Right cardiac atrium (tissue), 5 donors: ENCODE measurements at regions of chr22 and their contacts with region 1.

Region 1: DNA sequence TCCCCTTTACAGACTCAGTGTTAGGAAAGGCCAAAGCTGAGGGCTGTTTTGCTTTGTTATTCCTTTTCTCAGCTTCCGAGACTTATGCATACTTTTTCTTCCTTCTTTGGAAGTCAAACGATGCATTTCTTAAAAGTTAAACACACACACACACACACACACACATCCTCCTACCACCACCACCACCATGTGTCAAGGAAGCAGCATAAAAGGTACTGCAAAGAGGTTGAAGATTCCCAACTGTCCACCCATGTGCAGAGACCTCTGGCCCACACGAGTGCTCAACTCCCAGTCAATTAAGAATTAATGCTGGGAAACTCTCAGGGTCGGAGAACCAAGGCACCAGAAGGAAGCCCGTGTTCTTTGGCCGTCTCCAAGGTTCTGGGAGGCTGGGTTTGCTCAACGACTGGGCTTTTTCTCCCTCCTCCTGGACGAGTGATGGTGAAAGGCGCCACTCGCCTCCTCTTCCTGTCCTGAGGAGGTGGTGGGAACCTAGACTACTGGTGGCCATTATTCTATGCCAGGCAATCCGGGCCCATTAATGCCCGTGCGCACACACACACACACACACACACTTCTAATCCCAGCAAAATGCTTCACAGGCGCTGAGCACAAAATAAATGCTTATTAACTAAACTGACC is 15.1 kb downstream of the MN1 start:
- DNase-seq: peak in 2 of 3 donors; percentile 46 to 68
- ATAC-seq: peak; percentile 26 to 30
- H3K4me3 ChIP-seq: no peak overlapping the region
- H3K27ac ChIP-seq: no peak overlapping the region
- H3K4me1 ChIP-seq: peaks cover 3% of the 10 kb centered on the region
- H3K27me3 ChIP-seq: no peaks in the 10 kb centered on the region

Region 2: GRCh38 chr22:27726697-27727449 is 59.5 kb before region 1 on chr22:
- intact Hi-C with region 1: loop called in 1 of 4 experiments (anchors 5 kb)
- DNase-seq: peak; percentile 90 to 92 (median 91)
- ATAC-seq: peak; percentile 97 to 98
- H3K4me3 ChIP-seq: no peak overlapping the region
- H3K27ac ChIP-seq: peak overlapping the region; percentile 86
- H3K4me1 ChIP-seq: peaks cover 11% of the 10 kb centered on the region
- H3K27me3 ChIP-seq: no peaks in the 10 kb centered on the region

Region 3: GRCh38 chr22:27737521-27737920 is 48.9 kb before region 1 on chr22:
- intact Hi-C with region 1: no loop called
- DNase-seq: no peak
- ATAC-seq: no peak
- H3K4me3 ChIP-seq: no peak overlapping the region
- H3K27ac ChIP-seq: no peak overlapping the region
- H3K4me1 ChIP-seq: no peaks in the 10 kb centered on the region
- H3K27me3 ChIP-seq: no peaks in the 10 kb centered on the region